Ascending aorta (tissue), 2 donors: ENCODE measurements at regions of chr16 and their contacts with region 1.

Region 1: DNA sequence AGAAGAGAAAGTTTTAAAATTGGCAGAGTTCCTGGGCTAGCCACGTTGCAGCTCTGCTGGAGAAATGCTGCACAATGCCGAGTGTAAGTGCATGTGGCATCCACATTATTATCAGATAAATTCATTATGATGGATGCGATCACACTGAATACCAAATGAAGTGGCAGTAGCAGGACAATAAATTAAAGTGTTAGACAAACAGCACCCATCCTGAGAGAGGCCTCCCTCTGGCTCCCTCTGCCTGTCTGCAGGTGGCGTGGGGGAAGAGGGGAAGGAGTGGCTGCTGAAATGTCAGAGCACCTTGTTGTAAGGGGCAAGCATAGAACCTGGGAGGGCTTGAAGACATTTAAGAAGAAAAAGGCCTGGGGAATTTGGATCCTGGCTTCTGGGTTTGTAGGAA is 324.1 kb downstream of the HAPSTR1 start:
- DNase-seq: no peak
- H3K4me3 ChIP-seq: no peak overlapping the region
- H3K27ac ChIP-seq: no peak overlapping the region
- H3K4me1 ChIP-seq: no peaks in the 10 kb centered on the region
- H3K27me3 ChIP-seq: no peaks in the 10 kb centered on the region
- CTCF ChIP-seq: no peak

Region 2: DNA sequence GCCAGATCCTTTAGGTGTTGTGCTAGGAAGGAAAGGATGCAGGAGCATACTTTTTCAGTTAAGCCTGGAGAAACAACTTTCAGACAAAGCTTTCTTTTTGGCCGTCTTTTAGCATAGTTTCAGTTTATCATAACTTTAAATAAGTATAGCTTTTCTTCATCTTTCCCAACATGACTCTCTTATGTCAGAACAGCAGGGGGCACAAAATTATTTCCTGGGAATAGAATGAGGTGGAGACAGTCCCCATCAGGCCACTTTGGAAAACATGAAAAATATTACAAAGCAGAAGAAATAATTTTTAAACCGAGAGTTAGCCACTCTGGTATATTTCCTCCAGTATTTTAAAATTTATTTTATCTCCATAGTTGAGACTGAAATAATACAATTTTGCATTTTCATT is 63.5 kb after region 1 on chr16:
- intact Hi-C with region 1: loop called (anchors 10 kb)
- DNase-seq: no peak
- H3K4me3 ChIP-seq: no peak overlapping the region
- H3K27ac ChIP-seq: no peak overlapping the region
- H3K4me1 ChIP-seq: no peaks in the 10 kb centered on the region
- H3K27me3 ChIP-seq: no peaks in the 10 kb centered on the region
- CTCF ChIP-seq: no peak

Region 3: DNA sequence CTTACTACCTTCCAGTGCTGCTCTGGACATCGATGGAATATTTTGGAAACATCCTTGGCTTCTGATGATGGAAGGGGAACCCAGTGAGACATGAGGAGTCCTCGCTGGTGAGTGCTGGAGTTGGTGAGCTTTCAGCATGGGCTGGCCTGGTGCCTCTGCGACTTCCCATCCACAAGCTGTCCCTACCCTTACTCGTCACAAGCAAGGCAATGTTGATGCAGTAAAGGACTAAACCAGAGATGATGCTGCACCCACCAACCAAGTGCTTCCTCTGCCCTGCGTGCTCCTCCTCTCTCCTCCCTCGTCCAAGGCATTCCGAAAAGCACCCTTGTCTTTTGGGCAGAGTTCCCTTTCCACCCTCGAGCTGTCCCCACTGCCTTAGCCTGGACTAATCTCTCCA is 612.0 kb after region 1 on chr16:
- intact Hi-C with region 1: no loop called
- DNase-seq: no peak
- H3K4me3 ChIP-seq: no peak overlapping the region
- H3K27ac ChIP-seq: no peak overlapping the region
- H3K4me1 ChIP-seq: no peaks in the 10 kb centered on the region
- H3K27me3 ChIP-seq: no peaks in the 10 kb centered on the region
- CTCF ChIP-seq: no peak